Tibial artery (tissue), 4 donors: ENCODE measurements at regions of chr9 and their contacts with region 1.

Region 1: DNA sequence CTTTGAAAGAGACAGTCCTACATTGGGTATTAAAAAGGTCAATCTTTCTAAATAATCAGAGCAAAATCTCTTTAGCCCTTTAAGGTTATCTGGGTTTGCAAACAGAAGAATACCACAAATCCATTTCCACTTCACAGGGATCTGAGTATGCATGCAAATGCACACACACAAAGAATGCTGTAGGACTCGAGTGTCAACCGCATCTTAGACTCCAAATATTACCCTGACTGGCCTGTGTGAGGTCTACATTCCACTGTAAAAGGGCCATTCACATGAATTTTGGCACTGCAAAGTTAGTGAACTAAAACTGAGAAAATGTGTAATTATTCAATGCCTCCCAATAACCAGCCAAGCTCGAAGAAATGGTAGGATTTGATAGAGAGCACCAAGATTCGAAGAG is 199.9 kb downstream of the AGTPBP1 start:
- DNase-seq: no peak
- H3K4me3 ChIP-seq: no peak overlapping the region
- H3K27ac ChIP-seq: no peak overlapping the region
- H3K4me1 ChIP-seq: peaks cover 0 to 10% (median 3%) of the 10 kb centered on the region in 4 donors
- H3K27me3 ChIP-seq: no peaks in the 10 kb centered on the region
- CTCF ChIP-seq: no peak

Region 2: DNA sequence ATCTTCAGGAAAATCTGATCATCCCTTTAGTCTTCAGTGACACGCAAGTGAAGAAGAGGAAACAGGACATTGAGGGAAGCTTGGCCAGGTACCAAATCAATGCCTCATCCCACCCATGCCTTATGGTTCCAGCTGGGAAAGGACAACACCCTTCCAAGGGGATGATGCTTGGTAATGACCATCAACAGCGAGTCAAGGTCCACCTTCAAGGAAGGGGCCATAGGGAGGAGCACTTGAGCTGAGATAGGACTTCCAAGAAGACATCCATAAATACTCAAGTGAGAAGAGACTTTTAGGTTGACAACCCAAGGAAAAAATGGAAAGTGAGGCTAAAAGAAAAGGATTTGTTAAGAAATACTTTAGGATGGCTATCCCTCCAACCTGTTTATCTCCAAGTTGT is 1432.6 kb after region 1 on chr9:
- intact Hi-C with region 1: loop called (anchors 5 kb)
- DNase-seq: no peak
- H3K4me3 ChIP-seq: no peak overlapping the region
- H3K27ac ChIP-seq: no peak overlapping the region
- H3K4me1 ChIP-seq: no peaks in the 10 kb centered on the region
- H3K27me3 ChIP-seq: no peaks in the 10 kb centered on the region
- CTCF ChIP-seq: no peak